ENCODE measurements at regions of chr5 and their contacts with region 1.

Region 1: DNA sequence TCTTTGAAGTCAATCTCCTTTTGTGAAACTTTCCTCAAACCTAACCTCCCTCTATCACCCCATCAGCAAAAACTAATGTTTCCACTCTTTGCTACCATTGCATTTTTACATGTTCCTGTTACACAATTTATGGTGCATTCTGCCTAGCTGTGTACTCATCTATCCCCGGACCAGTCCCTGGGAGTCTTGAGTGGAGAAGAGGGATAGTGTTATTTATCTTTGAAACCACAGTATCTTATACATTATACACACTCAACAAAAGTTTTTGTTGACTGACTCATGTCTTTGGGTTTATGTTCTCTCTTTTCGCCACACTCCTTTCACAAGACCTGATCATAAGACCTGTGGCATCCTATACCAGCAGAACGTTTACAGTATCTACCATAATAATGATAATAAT is 26.4 kb downstream of the TNFAIP8 start:
- DNase-seq: no peak
- H3K4me3 ChIP-seq: no peak overlapping the region
- H3K4me3 Mint-ChIP-seq: peak overlapping the region in 3 of 8 donors; percentile 20 to 58 (median 32)
- H3K27ac ChIP-seq: no peak overlapping the region
- H3K27ac Mint-ChIP-seq: peak overlapping the region in 5 of 7 donors; percentile 12 to 83 (median 69)
- H3K4me1 ChIP-seq: peaks cover 95% of the 10 kb centered on the region
- H3K4me1 Mint-ChIP-seq: peaks cover 67 to 93% (median 78%) of the 10 kb centered on the region in 4 donors
- H3K27me3 ChIP-seq: no peaks in the 10 kb centered on the region
- H3K27me3 Mint-ChIP-seq: no peaks in the 10 kb centered on the region

Region 2: DNA sequence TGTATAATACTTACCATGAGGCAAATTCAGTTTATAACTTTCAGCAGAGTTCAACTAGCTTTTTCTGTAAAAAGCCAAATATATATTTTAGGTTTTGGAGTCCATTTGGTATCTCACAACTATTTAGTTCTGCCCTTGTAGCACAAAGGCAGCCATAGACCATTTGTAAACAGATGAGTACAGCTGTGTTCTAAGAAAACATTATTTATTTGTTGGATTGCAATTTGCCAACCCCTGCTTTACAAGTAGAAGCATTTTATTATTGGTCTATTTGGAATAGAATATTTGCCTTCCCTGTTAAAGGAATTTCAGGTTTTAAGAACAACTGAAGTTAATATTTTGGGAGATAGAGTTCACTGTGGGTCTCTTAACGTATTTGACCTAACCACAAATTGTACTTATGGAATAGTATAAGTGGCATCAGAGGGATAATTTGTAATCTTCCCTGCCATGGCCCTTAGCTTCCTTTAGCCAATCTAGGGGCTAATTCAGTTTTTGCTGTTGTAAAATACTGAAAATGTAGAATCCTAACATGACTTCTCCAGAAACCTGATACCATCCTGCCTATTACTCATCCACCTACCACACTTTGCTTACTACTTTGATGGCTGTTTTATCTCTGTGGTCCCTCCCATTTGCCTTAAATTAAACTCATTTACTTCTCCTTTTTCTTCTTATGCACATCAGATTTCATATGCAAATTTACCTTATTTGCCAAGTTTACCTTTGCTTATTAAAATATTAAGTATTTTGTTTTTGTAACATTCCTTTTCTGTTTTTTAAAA is 202.1 kb before region 1 on chr5:
- CTCF ChIA-PET with region 1: no interaction called
- POLR2A ChIA-PET with region 1: no interaction called
- intact Hi-C with region 1: no loop called
- DNase-seq: no peak
- H3K4me3 ChIP-seq: no peak overlapping the region
- H3K4me3 Mint-ChIP-seq: no peak overlapping the region
- H3K27ac ChIP-seq: no peak overlapping the region
- H3K27ac Mint-ChIP-seq: no peak overlapping the region
- H3K4me1 ChIP-seq: no peaks in the 10 kb centered on the region
- H3K4me1 Mint-ChIP-seq: no peaks in the 10 kb centered on the region
- H3K27me3 ChIP-seq: no peaks in the 10 kb centered on the region
- H3K27me3 Mint-ChIP-seq: no peaks in the 10 kb centered on the region

Region 3: GRCh38 chr5:119309326-119309725 is 72.8 kb before region 1 on chr5:
- CTCF ChIA-PET with region 1: no interaction called
- POLR2A ChIA-PET with region 1: no interaction called
- intact Hi-C with region 1: no loop called
- DNase-seq: peak in 1 of 5 donors; percentile 41
- H3K4me3 ChIP-seq: no peak overlapping the region
- H3K4me3 Mint-ChIP-seq: peak overlapping the region; percentile 68 to 93 (median 78)
- H3K27ac ChIP-seq: peak overlapping the region; percentile 52
- H3K27ac Mint-ChIP-seq: peak overlapping the region; percentile 94 to 99 (median 98)
- H3K4me1 ChIP-seq: peaks cover 100% of the 10 kb centered on the region
- H3K4me1 Mint-ChIP-seq: peaks cover 70 to 97% (median 82%) of the 10 kb centered on the region in 4 donors
- H3K27me3 ChIP-seq: no peaks in the 10 kb centered on the region
- H3K27me3 Mint-ChIP-seq: no peaks in the 10 kb centered on the region

Region 4: GRCh38 chr5:119367502-119368237 is 14.5 kb before region 1 on chr5:
- CTCF ChIA-PET with region 1: interaction called, 5 read pairs
- POLR2A ChIA-PET with region 1: interaction called, 5 read pairs
- intact Hi-C with region 1: loop called (anchors 2 kb)
- DNase-seq: peak in 1 of 5 donors; percentile 71
- H3K4me3 ChIP-seq: peak overlapping the region in 1 of 2 donors; percentile 28
- H3K4me3 Mint-ChIP-seq: peak overlapping the region in 7 of 8 donors; percentile 61 to 83 (median 68)
- H3K27ac ChIP-seq: peak overlapping the region; percentile 62
- H3K27ac Mint-ChIP-seq: peak overlapping the region; percentile 85 to 91 (median 88)
- H3K4me1 ChIP-seq: peaks cover 87% of the 10 kb centered on the region
- H3K4me1 Mint-ChIP-seq: peaks cover 70 to 87% (median 79%) of the 10 kb centered on the region in 4 donors
- H3K27me3 ChIP-seq: no peaks in the 10 kb centered on the region
- H3K27me3 Mint-ChIP-seq: no peaks in the 10 kb centered on the region

Region 5: GRCh38 chr5:119397518-119398380 is 15.6 kb after region 1 on chr5:
- CTCF ChIA-PET with region 1: interaction called, 5 read pairs
- POLR2A ChIA-PET with region 1: interaction called, 5 read pairs
- intact Hi-C with region 1: loop called (anchors 2 kb)
- DNase-seq: peak in 1 of 5 donors; percentile 48
- H3K4me3 ChIP-seq: no peak overlapping the region
- H3K4me3 Mint-ChIP-seq: peak overlapping the region in 4 of 8 donors; percentile 3 to 76 (median 19)
- H3K27ac ChIP-seq: no peak overlapping the region
- H3K27ac Mint-ChIP-seq: peak overlapping the region; percentile 15 to 91 (median 69)
- H3K4me1 ChIP-seq: peaks cover 49% of the 10 kb centered on the region
- H3K4me1 Mint-ChIP-seq: peaks cover 46 to 62% (median 54%) of the 10 kb centered on the region in 4 donors
- H3K27me3 ChIP-seq: no peaks in the 10 kb centered on the region
- H3K27me3 Mint-ChIP-seq: no peaks in the 10 kb centered on the region